GM12878 (cell line): ENCODE measurements at regions of chr22 and their contacts with region 1.

Region 1: GRCh38 chr22:38872172-38872830 is at the start of gene CBX6:
- DNase-seq: peak; percentile 37
- ATAC-seq: peak; percentile 42
- H3K4me3 ChIP-seq: peak within 1 kb of the TSS; percentile 89
- H3K27ac ChIP-seq: peak within 1 kb of the TSS; percentile 83
- H3K4me1 ChIP-seq: peaks cover 29% of the 10 kb centered on the region
- H3K27me3 ChIP-seq: no peaks in the 10 kb centered on the region
- CTCF ChIP-seq: no peak
- EP300 ChIP-seq: peak in 1 of 2 experiments; percentile 65; a peak in 1 of 4 replicates
- POLR2A ChIP-seq: peak; percentile 81
- RAD21 ChIP-seq: no peak
- polyA plus RNA-seq, gene CBX6: 3.6 to 4.5 TPM

Region 2: DNA sequence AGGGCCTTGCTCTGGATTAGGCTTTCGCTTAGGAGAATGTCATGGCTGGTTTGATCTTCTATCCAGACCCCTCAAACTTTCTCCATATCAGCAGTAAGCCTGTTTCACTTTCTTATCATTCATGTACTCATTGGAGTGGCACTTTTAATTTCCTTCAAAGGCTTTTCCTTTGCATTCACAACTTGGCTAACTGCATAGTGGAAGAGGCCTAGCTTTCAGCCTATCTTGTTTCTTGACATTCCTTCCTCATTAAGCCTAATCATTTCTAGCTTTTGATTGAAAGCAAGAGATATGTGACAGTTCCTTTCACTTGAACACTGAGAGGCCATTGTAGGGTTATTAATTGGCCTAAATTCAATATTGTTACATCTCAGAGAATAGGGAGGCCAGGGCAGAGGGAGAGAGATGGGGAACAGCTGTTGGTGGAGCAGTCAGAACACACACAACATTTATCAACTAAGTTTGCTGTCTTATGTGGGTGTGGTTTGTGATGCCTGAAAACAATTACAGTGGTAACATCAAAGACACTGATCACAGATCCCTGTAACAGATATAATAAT is 47.4 kb after region 1 on chr22:
- CTCF ChIA-PET with region 1: interaction called, 14 read pairs
- POLR2A ChIA-PET with region 1: no interaction called
- RAD21 ChIA-PET with region 1: interaction called, 6 read pairs
- SMC1A ChIA-PET with region 1: interaction called, 4 read pairs
- in situ Hi-C with region 1: no loop called
- intact Hi-C with region 1: no loop called
- DNase-seq: no peak
- ATAC-seq: no peak
- H3K4me3 ChIP-seq: no peak overlapping the region
- H3K27ac ChIP-seq: no peak overlapping the region
- H3K4me1 ChIP-seq: no peaks in the 10 kb centered on the region
- H3K27me3 ChIP-seq: peaks cover 0 to 2% of the 10 kb centered on the region in 2 experiments; a peak in 1 of 4 replicates
- CTCF ChIP-seq: no peak
- EP300 ChIP-seq: no peak
- POLR2A ChIP-seq: no peak
- RAD21 ChIP-seq: no peak

Region 3: DNA sequence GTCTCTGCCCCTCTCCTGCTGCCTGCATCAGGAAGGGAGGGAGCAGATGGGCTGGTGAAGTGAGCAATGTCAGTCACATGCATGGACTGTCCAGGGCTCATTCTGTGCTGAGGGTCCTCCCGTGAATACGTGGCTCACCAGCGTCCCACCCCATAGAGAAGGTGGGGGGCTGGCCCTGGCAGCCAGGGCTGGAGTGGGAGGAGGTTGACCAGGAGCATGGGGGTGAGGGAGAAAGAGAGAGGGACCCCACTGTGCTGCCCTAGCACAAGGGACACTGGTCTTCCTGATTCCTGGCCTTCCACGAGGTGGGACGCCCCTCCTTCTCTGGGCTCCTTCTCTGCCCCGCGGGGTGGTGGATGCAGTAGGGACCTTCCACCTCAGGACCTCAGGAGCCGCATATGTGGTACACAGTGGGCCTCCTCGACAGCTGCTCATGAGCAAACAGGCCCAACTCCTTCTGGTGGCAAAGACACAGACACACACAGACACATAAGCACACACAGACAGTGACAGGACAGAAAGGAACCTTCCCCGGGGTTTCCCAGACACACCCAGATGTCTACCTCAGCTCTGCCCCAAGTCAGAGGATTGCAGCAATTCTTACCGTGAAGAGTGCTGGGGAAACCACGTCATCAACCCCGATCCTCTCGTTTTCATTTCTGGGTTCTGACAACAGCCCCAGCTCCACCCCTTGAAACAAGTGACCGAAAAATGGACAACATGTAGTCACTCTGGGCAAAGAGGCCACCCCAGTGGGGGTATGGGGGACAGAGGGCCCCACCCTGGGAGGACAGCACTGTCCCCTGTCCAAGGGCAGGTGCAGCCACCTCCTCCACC is 81.5 kb after region 1 on chr22:
- CTCF ChIA-PET with region 1: interaction called, 41 read pairs
- POLR2A ChIA-PET with region 1: interaction called, 7 read pairs
- RAD21 ChIA-PET with region 1: interaction called, 7 read pairs
- SMC1A ChIA-PET with region 1: interaction called, 7 read pairs
- in situ Hi-C with region 1: no loop called
- intact Hi-C with region 1: no loop called
- DNase-seq: peak; percentile 85
- ATAC-seq: peak; percentile 94
- H3K4me3 ChIP-seq: peak overlapping the region; percentile 48
- H3K27ac ChIP-seq: peak overlapping the region; percentile 78
- H3K4me1 ChIP-seq: peaks cover 24% of the 10 kb centered on the region
- H3K27me3 ChIP-seq: no peaks in the 10 kb centered on the region
- CTCF ChIP-seq: no peak
- EP300 ChIP-seq: peak in 1 of 2 experiments; percentile 19; a peak in 1 of 4 replicates
- POLR2A ChIP-seq: peak; percentile 77
- RAD21 ChIP-seq: no peak

Region 4: DNA sequence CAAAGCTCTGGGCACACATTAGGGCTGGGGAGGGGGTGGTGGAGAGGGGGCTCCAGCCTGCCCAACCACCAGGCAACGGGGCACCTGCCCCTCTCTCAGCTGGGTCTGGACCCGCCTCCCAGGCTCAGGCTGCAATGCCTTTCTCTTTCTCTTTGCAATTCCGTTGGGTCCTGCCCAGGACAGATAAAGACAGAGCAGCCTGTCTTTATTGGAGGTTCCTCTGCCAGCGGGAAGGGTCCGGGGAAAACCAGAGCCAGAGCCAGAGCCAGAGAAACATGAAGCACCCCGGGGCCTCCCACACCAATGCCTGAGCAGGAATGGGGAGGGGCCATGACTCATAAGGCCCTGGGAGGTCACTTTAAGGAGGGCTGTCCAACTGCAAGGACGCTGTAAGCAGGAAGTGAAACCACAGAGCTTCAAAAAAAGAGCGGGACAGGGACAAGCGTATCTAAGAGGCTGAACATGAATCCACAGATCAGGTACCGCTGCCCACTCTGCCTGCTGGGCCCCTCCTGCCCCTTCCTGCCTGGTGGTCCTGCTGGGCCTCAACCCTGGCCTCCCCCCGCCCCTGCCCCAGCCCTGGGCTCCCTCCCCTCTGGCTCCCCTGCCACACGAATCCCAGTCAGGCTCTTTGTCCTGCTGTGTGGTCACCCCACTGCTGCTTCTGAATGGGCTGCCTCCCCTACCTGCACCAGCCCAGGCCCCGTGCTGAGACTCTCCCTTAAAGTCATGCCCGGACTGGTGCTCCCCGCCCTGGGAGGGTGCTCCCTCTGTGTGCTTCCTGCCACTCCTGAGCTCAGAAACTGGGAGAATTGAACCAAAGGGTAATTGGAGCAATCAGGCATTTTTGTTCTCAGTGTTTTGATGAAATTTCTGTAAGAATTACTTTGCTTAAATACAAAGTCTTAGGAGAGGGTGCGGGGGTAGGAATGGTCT is 110.0 kb after region 1 on chr22 and contains the start of gene APOBEC3B:
- CTCF ChIA-PET with region 1: interaction called, 51 read pairs
- POLR2A ChIA-PET with region 1: interaction called, 5 read pairs
- RAD21 ChIA-PET with region 1: interaction called, 16 read pairs
- SMC1A ChIA-PET with region 1: interaction called, 13 read pairs
- in situ Hi-C with region 1: no loop called
- intact Hi-C with region 1: loop called (anchors 5 kb)
- DNase-seq: peak; percentile 85
- ATAC-seq: peak; percentile 84
- H3K4me3 ChIP-seq: peak within 1 kb of the TSS; percentile 64
- H3K27ac ChIP-seq: peak within 1 kb of the TSS; percentile 67
- H3K4me1 ChIP-seq: peaks cover 34% of the 10 kb centered on the region
- H3K27me3 ChIP-seq: no peaks in the 10 kb centered on the region
- CTCF ChIP-seq: no peak
- EP300 ChIP-seq: no peak
- POLR2A ChIP-seq: peak; percentile 42; the same call in 1 of the 2 replicates
- RAD21 ChIP-seq: no peak
- polyA plus RNA-seq, gene APOBEC3B: 56.6 to 75.1 TPM

Region 5: DNA sequence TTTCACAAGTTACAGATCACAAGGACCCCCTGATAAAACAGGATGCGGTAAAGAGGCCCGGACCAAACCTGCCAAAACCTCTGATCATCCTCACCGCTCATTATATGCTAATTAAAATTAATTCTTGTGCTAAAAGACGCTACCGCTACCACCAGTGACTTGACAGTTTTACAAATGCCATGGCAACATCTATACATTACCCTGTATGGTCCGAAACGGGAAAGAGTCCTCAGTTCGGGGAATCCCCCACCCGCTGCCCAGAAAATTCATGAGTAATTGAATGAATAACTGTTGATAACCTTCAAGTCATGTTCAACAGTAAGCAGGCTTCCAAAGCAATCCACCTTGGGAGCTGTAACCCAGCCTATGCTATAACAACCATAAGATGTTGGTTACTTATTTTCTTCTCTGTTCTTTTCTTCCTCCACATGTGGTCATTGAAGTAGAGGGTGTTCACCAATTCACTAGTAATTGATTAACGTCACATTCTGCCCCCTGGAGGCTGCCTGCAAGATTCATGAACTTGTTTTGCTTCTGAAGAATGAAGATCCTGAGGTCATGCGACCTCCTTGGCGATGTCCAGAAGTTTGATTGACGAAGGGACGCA is 245.4 kb after region 1 on chr22:
- CTCF ChIA-PET with region 1: interaction called, 26 read pairs
- POLR2A ChIA-PET with region 1: interaction called, 7 read pairs
- RAD21 ChIA-PET with region 1: interaction called, 12 read pairs
- SMC1A ChIA-PET with region 1: interaction called, 6 read pairs
- in situ Hi-C with region 1: loop called (anchors 5 kb)
- intact Hi-C with region 1: loop called (anchors 5 kb)
- DNase-seq: peak; percentile 81
- ATAC-seq: peak; percentile 75
- H3K4me3 ChIP-seq: no peak overlapping the region
- H3K27ac ChIP-seq: peak overlapping the region; percentile 96
- H3K4me1 ChIP-seq: peaks cover 49% of the 10 kb centered on the region
- H3K27me3 ChIP-seq: no peaks in the 10 kb centered on the region
- CTCF ChIP-seq: peak; percentile 56 to 75 (median 64)
- EP300 ChIP-seq: peak; percentile 82 to 95
- POLR2A ChIP-seq: no peak
- RAD21 ChIP-seq: peak; percentile 86

Region 6: DNA sequence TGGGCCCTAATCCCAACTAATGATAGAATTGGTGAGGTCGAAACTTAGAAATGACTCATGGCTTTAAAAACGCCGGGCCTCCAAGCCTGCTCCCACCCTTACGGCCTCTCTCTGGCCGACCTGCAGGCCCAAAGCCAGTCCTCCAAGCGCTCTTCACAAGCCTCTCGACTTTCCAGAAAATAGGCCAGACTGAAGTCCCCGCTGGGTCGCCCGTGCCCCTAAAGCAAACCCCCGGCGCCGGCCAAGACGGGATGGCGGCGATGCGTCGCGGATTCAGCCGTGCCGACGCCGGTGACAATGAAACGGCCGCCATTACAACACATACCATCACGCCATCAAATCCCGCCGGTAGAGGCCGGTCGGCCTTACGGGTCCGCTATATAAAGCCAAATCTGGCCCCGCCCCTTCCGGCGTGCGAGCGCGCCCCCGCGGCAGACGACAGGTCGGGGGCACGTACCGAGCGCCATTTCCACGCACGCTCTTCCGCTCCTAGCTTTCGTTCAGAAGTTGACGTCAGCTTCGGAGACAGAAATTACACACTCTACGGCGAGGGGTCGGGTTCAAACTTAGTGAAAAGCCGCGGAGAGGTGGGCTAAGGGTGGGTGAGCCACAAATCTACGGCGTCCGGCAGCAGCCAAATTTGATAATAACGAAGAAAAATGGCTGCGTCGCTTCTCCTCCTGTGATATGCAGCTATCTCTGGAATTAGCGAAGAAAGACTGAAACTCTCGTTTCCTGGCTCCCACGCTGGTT is 447.1 kb after region 1 on chr22 and contains the start of gene RPL3:
- CTCF ChIA-PET with region 1: interaction called, 23 read pairs
- POLR2A ChIA-PET with region 1: interaction called, 3 read pairs
- RAD21 ChIA-PET with region 1: interaction called, 12 read pairs
- SMC1A ChIA-PET with region 1: interaction called, 3 read pairs
- in situ Hi-C with region 1: no loop called
- intact Hi-C with region 1: loop called (anchors 5 kb)
- DNase-seq: peak; percentile 97
- ATAC-seq: peak; percentile 83
- H3K4me3 ChIP-seq: peak within 1 kb of the TSS; percentile 85
- H3K27ac ChIP-seq: peak within 1 kb of the TSS; percentile 89
- H3K4me1 ChIP-seq: peaks cover 20% of the 10 kb centered on the region
- H3K27me3 ChIP-seq: no peaks in the 10 kb centered on the region
- CTCF ChIP-seq: peak in 2 of 3 experiments; percentile 7 to 8; a peak in 2 of 6 replicates
- EP300 ChIP-seq: 0 out of 4 replicates have a peak, but pooled peaks of 1 of the 2 experiments have one; percentile 2
- POLR2A ChIP-seq: peak; percentile 99
- RAD21 ChIP-seq: no peak
- polyA plus RNA-seq, gene RPL3: 4,597 to 6,791 TPM